ENCODE measurements at regions of chr3 and their contacts with region 1.

Region 1: GRCh38 chr3:180870008-180870699 is 42.3 kb upstream of the FXR1 start:
- DNase-seq: peak; percentile 49 to 79
- ATAC-seq: peak; percentile 65 to 78 (median 71)
- H3K4me3 ChIP-seq: peak overlapping the region; percentile 62
- H3K27ac ChIP-seq: peak overlapping the region; percentile 81
- H3K4me1 ChIP-seq: peaks cover 17% of the 10 kb centered on the region
- H3K27me3 ChIP-seq: no peaks in the 10 kb centered on the region
- CTCF ChIP-seq: no peak

Region 2: DNA sequence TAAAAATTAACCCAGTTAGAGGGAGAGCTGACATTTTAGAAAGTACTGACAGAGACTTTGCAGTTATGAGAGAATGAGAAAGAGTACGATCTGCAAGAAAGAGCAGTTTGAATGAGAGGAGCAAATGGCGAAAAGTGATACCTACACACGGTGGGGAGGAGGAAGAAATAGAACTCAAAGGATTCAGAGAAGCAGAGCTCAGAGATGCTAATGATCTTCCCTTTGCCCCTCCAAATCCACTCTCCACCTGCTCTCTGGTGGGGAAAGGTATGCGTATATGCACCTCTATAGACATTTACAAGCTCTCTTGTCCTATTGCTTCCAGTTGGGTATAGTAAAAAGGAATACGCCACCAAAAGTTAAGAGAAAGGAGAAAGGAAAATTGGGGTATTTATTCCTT is 391.5 kb before region 1 on chr3:
- intact Hi-C with region 1: no loop called
- DNase-seq: no peak
- ATAC-seq: no peak
- H3K4me3 ChIP-seq: no peak overlapping the region
- H3K27ac ChIP-seq: no peak overlapping the region
- H3K4me1 ChIP-seq: no peaks in the 10 kb centered on the region
- H3K27me3 ChIP-seq: no peaks in the 10 kb centered on the region
- CTCF ChIP-seq: no peak

Region 3: DNA sequence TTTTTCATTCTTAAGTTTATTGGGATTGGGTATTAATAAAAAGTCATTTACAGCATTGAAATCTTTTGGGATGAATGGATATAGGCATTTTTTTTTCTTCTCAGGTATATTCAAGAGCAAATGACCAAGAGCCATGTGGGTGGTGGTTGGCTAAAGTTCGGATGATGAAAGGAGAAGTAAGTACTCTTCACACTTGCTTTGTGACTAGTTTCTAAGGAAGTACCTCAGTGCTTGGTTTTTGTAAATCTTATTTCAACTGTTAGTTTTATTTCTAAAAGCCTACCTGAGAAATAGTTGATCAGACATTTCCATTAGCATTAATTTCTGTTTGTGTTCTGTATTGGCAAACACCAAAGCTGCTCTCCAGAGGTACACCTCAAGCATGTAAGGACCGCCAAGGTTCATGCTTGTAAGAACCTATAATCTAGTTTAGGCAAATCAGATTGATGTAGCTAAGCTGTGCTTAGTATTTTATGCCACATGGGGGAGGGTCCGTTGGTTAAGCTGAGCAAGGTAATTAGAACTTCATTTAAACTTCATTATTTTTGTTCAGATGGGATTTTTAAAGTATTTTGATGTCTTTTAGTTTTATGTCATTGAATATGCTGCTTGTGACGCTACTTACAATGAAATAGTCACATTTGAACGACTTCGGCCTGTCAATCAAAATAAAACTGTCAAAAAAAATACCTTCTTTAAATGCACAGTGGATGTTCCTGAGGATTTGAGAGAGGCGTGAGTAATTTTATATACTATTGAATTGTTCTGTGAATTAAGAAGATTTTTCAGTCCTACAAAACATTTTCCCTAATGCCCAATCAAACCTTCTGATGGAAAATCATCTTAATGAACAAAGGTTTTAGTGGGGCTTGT is 77.8 kb after region 1 on chr3:
- intact Hi-C with region 1: no loop called
- DNase-seq: no peak
- ATAC-seq: no peak
- H3K4me3 ChIP-seq: no peak overlapping the region
- H3K27ac ChIP-seq: no peak overlapping the region
- H3K4me1 ChIP-seq: peaks cover 9% of the 10 kb centered on the region
- H3K27me3 ChIP-seq: no peaks in the 10 kb centered on the region
- CTCF ChIP-seq: no peak

Region 4: GRCh38 chr3:180980611-180981010 is 110.5 kb after region 1 on chr3:
- intact Hi-C with region 1: loop called in 1 of 2 experiments (anchors 5 kb)
- DNase-seq: no peak
- ATAC-seq: peak; percentile 87 to 95 (median 92)
- H3K4me3 ChIP-seq: peak overlapping the region; percentile 31
- H3K27ac ChIP-seq: peak overlapping the region; percentile 77
- H3K4me1 ChIP-seq: peaks cover 22% of the 10 kb centered on the region
- H3K27me3 ChIP-seq: no peaks in the 10 kb centered on the region
- CTCF ChIP-seq: no peak

Region 5: DNA sequence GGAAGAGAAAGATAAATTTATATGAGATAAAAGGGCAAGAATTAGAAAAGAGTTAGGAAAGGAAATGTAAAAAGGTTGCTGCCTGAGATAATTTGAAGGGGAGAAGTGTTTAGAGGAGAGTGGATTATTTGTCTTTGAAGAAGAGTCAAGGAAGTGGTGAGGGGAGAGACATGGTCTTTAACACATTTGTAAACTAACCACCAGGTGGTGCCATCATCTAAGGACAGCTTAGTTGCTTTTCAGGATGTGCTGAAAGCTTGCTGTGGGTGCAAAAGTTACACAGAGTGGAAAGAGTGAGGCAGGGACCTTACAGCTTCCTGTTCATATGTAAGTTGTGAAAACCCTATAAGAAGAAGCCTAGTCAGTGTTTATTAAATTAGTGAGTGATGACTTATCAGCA is 233.5 kb after region 1 on chr3:
- intact Hi-C with region 1: no loop called
- DNase-seq: no peak
- ATAC-seq: no peak
- H3K4me3 ChIP-seq: no peak overlapping the region
- H3K27ac ChIP-seq: no peak overlapping the region
- H3K4me1 ChIP-seq: no peaks in the 10 kb centered on the region
- H3K27me3 ChIP-seq: no peaks in the 10 kb centered on the region
- CTCF ChIP-seq: no peak

Region 6: DNA sequence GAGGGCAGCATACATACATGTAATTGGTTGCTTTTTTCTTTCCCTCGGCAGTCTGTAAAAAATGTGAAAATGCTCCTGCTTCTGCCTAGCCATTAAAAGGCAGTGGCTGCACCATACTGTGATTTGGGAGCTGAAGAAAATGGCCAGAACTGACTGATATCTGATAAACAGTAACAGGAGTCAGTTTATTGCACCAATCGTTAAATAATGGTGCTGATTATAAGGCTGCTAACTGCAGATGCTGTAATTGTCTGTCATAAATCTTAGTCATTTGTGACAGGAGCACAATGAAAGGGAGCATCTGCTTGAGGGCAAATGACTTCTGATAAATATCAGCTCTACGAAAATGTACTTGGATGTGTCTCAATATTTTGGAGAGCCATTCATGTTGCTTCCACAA is 382.5 kb after region 1 on chr3:
- intact Hi-C with region 1: no loop called
- DNase-seq: no peak
- ATAC-seq: no peak
- H3K4me3 ChIP-seq: no peak overlapping the region
- H3K27ac ChIP-seq: no peak overlapping the region
- H3K4me1 ChIP-seq: no peaks in the 10 kb centered on the region
- H3K27me3 ChIP-seq: no peaks in the 10 kb centered on the region
- CTCF ChIP-seq: no peak

Measured in psoas muscle (tissue), 8 donors.